ENCODE measurements at regions of chr2 and their contacts with region 1.

Region 1: GRCh38 chr2:7567646-7568045 is 650.4 kb downstream of the RNF144A start:
- DNase-seq: peak; percentile 16 to 92 (median 79)
- ATAC-seq: peak; percentile 92
- H3K4me3 ChIP-seq: peak overlapping the region; percentile 14
- H3K4me3 Mint-ChIP-seq: peak overlapping the region; percentile 48 to 79 (median 72)
- H3K27ac ChIP-seq: peak overlapping the region; percentile 61
- H3K27ac Mint-ChIP-seq: peak overlapping the region; percentile 89 to 99 (median 96)
- H3K4me1 ChIP-seq: peaks cover 17 to 45% of the 10 kb centered on the region in 2 donors
- H3K4me1 Mint-ChIP-seq: peaks cover 30 to 72% (median 66%) of the 10 kb centered on the region in 7 donors
- H3K27me3 ChIP-seq: no peaks in the 10 kb centered on the region
- H3K27me3 Mint-ChIP-seq: no peaks in the 10 kb centered on the region

Region 2: DNA sequence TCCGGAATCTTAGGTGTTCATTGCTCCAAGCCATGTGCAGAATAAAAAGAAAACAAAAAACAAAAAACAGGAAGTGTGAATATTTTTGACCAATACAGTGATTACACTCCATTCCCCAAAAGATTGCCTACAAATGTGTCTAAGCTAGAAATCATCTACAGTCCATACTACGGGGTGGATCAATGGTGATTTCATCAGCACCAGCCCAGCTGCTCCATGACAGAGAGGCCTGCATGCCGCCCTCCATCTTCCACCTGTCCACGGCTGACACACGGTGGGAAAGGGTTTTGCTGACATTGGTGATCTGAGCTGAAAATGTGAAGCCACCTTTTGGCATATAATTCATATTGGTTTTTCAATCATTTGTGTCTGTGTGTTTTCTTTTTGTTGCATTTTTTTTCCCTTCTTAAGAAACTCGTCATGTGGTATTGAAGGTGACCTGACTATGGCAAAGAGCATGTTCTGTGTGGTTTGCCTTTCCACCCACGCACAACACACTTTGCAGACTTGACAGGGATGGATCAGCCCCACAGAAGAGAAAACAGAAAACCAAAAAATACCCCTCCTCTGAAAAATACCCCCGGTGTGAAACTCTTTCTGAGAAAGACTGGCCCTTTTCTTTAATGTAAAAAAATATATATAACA is 117.3 kb before region 1 on chr2:
- CTCF ChIA-PET with region 1: interaction called, 5 read pairs
- POLR2A ChIA-PET with region 1: interaction called, 20 read pairs
- intact Hi-C with region 1: loop called (anchors 1 kb)
- DNase-seq: peak in 8 of 9 donors; percentile 66 to 88 (median 72)
- ATAC-seq: peak; percentile 91
- H3K4me3 ChIP-seq: no peak overlapping the region
- H3K4me3 Mint-ChIP-seq: peak overlapping the region; percentile 39 to 87 (median 77)
- H3K27ac ChIP-seq: peak overlapping the region; percentile 60
- H3K27ac Mint-ChIP-seq: peak overlapping the region; percentile 90 to 98 (median 96)
- H3K4me1 ChIP-seq: peaks cover 41 to 65% of the 10 kb centered on the region in 2 donors
- H3K4me1 Mint-ChIP-seq: peaks cover 44 to 93% (median 78%) of the 10 kb centered on the region in 7 donors
- H3K27me3 ChIP-seq: no peaks in the 10 kb centered on the region
- H3K27me3 Mint-ChIP-seq: no peaks in the 10 kb centered on the region

Region 3: DNA sequence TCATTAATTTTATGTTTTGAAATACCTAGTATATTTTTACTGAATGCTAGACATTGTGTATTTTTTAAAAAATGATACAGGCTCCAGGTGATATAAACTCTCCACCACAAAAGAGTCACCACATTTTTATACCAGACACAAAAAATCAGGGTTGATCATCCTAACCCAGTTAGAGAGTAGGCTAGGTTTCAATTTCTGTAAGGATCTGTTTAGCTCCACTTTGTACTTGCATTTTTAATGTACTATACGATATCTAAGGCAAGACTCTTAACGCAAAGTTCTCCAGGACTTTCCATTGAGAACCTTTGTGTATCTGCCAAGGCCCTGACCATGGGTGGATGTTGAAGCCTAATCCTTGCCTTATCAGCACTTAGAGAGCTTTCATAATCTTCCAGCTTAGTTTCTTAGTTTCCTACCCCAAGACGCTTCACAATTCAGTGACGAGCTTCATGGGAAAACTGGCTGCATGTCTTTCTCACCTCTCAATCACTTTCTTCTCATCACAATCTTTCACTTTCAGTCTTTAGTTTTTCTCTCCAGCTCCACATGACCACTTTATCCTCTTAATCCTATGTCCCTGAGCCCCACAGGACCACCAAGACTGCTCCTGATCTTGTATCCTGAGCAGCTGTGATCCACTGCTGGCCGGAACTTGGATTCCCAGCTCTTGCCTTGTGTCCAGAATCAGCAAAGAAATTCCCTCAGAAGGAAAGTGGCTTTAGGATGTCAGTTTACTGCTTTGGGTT is 14.6 kb before region 1 on chr2:
- CTCF ChIA-PET with region 1: interaction called, 4 read pairs
- POLR2A ChIA-PET with region 1: interaction called, 3 read pairs
- intact Hi-C with region 1: loop called in 1 of 2 experiments (anchors 2 kb)
- DNase-seq: no peak
- ATAC-seq: no peak
- H3K4me3 ChIP-seq: peak overlapping the region; percentile 22
- H3K4me3 Mint-ChIP-seq: peak overlapping the region; percentile 5 to 87 (median 61)
- H3K27ac ChIP-seq: no peak overlapping the region
- H3K27ac Mint-ChIP-seq: peak overlapping the region; percentile 5 to 82 (median 46)
- H3K4me1 ChIP-seq: peaks cover 0 to 6% of the 10 kb centered on the region in 2 donors
- H3K4me1 Mint-ChIP-seq: peaks cover 9 to 30% (median 22%) of the 10 kb centered on the region in 7 donors
- H3K27me3 ChIP-seq: no peaks in the 10 kb centered on the region
- H3K27me3 Mint-ChIP-seq: no peaks in the 10 kb centered on the region

Region 4: DNA sequence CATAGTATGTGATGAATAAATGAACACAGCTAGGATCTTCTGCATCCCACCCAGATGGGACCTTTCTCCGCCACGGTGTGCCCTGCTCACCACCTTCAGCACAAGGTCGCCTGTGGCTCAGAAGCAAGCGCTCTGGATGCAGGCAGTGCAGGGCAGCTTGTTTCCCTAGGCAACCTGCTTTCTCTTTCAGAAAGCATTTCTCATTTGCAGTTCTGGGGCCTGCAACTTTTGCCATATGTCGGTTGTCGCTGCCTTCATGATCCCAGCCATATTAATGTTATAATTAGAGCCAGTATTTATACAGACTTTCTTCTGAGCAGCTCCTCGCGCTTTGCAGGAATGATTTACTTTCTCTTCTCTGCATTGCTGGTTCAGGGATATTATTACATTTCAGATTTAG is 42.3 kb after region 1 on chr2:
- CTCF ChIA-PET with region 1: interaction called, 3 read pairs
- POLR2A ChIA-PET with region 1: no interaction called
- intact Hi-C with region 1: loop called in 1 of 2 experiments (anchors 5 kb)
- DNase-seq: peak in 2 of 9 donors; percentile 11 to 23
- ATAC-seq: no peak
- H3K4me3 ChIP-seq: no peak overlapping the region
- H3K4me3 Mint-ChIP-seq: peak overlapping the region in 7 of 10 donors; percentile 12 to 64 (median 34)
- H3K27ac ChIP-seq: no peak overlapping the region
- H3K27ac Mint-ChIP-seq: peak overlapping the region; percentile 14 to 83 (median 56)
- H3K4me1 ChIP-seq: no peaks in the 10 kb centered on the region
- H3K4me1 Mint-ChIP-seq: peaks cover 15 to 51% (median 23%) of the 10 kb centered on the region in 7 donors
- H3K27me3 ChIP-seq: no peaks in the 10 kb centered on the region
- H3K27me3 Mint-ChIP-seq: no peaks in the 10 kb centered on the region

Region 5: GRCh38 chr2:7725171-7725849 is 157.7 kb after region 1 on chr2:
- CTCF ChIA-PET with region 1: interaction called, 3 read pairs
- POLR2A ChIA-PET with region 1: interaction called, 4 read pairs
- intact Hi-C with region 1: loop called (anchors 2 to 5 kb)
- DNase-seq: peak in 5 of 9 donors; percentile 17 to 51 (median 38)
- ATAC-seq: peak; percentile 78
- H3K4me3 ChIP-seq: peak overlapping the region; percentile 25
- H3K4me3 Mint-ChIP-seq: peak overlapping the region in 9 of 10 donors; percentile 26 to 86 (median 58)
- H3K27ac ChIP-seq: no peak overlapping the region
- H3K27ac Mint-ChIP-seq: peak overlapping the region; percentile 8 to 89 (median 65)
- H3K4me1 ChIP-seq: peaks cover 17 to 34% of the 10 kb centered on the region in 2 donors
- H3K4me1 Mint-ChIP-seq: peaks cover 13 to 63% (median 34%) of the 10 kb centered on the region in 7 donors
- H3K27me3 ChIP-seq: no peaks in the 10 kb centered on the region
- H3K27me3 Mint-ChIP-seq: no peaks in the 10 kb centered on the region

Region 6: GRCh38 chr2:7825591-7826312 is 258.1 kb after region 1 on chr2:
- CTCF ChIA-PET with region 1: no interaction called
- POLR2A ChIA-PET with region 1: no interaction called
- intact Hi-C with region 1: loop called in 1 of 2 experiments (anchors 10 kb)
- DNase-seq: peak in 1 of 9 donors; percentile 63
- ATAC-seq: peak; percentile 36
- H3K4me3 ChIP-seq: no peak overlapping the region
- H3K4me3 Mint-ChIP-seq: peak overlapping the region in 1 of 10 donors; percentile 54
- H3K27ac ChIP-seq: no peak overlapping the region
- H3K27ac Mint-ChIP-seq: peak overlapping the region in 4 of 9 donors; percentile 10 to 78 (median 44)
- H3K4me1 ChIP-seq: no peaks in the 10 kb centered on the region
- H3K4me1 Mint-ChIP-seq: peaks cover 0 to 25% (median 4%) of the 10 kb centered on the region in 7 donors
- H3K27me3 ChIP-seq: no peaks in the 10 kb centered on the region
- H3K27me3 Mint-ChIP-seq: no peaks in the 10 kb centered on the region

Region 7: GRCh38 chr2:8076448-8077342 is 509.0 kb after region 1 on chr2:
- CTCF ChIA-PET with region 1: no interaction called
- POLR2A ChIA-PET with region 1: no interaction called
- intact Hi-C with region 1: no loop called
- DNase-seq: no peak
- ATAC-seq: peak; percentile 58
- H3K4me3 ChIP-seq: no peak overlapping the region
- H3K4me3 Mint-ChIP-seq: no peak overlapping the region
- H3K27ac ChIP-seq: no peak overlapping the region
- H3K27ac Mint-ChIP-seq: peak overlapping the region in 1 of 9 donors; percentile 25
- H3K4me1 ChIP-seq: no peaks in the 10 kb centered on the region
- H3K4me1 Mint-ChIP-seq: peaks cover 0 to 10% (median 5%) of the 10 kb centered on the region in 7 donors
- H3K27me3 ChIP-seq: no peaks in the 10 kb centered on the region
- H3K27me3 Mint-ChIP-seq: no peaks in the 10 kb centered on the region

Region 8: GRCh38 chr2:8598295-8599165 is 1030.9 kb after region 1 on chr2:
- CTCF ChIA-PET with region 1: no interaction called
- POLR2A ChIA-PET with region 1: no interaction called
- intact Hi-C with region 1: loop called in 1 of 2 experiments (anchors 10 kb)
- DNase-seq: peak in 1 of 9 donors; percentile 19
- ATAC-seq: peak; percentile 92
- H3K4me3 ChIP-seq: no peak overlapping the region
- H3K4me3 Mint-ChIP-seq: no peak overlapping the region
- H3K27ac ChIP-seq: no peak overlapping the region
- H3K27ac Mint-ChIP-seq: no peak overlapping the region
- H3K4me1 ChIP-seq: no peaks in the 10 kb centered on the region
- H3K4me1 Mint-ChIP-seq: peaks cover 0 to 9% (median 0%) of the 10 kb centered on the region in 7 donors
- H3K27me3 ChIP-seq: no peaks in the 10 kb centered on the region
- H3K27me3 Mint-ChIP-seq: peaks cover 0 to 3% (median 0%) of the 10 kb centered on the region in 5 donors

Measured in naive thymus-derived CD4-positive, alpha-beta T cell (primary cell).